ENCODE measurements at regions of chr6 and their contacts with region 1.

Region 1: DNA sequence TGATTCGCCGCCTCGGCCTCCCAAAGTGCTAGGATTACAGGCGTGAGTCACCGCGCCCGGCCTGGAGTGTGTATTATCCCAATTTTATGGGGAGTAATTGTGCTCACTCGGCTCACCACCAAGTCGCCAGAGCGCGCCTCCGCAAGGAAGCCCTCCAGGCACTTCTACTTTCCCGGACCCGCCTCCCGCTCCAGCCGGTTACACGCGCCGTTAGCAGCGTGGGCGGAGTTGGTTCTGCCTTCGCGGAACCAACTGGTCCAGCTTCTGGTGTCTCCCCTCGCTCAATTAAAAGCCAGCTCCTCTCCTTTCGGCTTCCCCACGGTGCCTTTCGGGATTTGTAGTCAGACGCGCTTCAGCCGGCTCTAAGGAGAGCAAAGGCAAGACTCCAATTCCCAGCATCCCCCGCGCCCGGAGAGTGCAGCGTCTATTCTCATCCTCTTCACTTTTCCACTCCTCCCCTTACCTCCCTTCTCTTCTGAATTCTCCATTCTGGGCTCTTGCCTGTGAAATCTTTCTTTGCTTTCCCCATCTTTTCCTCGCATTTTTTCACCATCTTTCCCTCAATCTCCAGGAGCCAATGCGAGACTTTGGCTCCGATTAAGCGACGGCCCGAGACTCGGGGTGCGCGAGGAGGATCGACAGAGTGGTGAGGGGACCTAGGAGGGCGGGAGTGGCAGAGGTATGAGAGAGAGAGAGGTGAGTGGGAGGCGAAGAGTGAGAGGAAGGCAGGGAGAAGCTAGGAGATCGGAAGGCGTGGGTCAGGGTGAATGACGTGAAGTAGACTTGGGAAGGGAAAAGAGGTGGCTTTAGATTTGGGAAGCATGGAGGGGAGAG is at the start of gene GTF2H4:
- DNase-seq: peak; percentile 99
- ATAC-seq: peak; percentile 96
- H3K4me3 ChIP-seq: peak within 1 kb of the TSS; percentile 99
- H3K27ac ChIP-seq: peak within 1 kb of the TSS; percentile 58
- H3K4me1 ChIP-seq: peaks cover 8 to 16% of the 10 kb centered on the region in 2 experiments; a peak in 3 of 4 replicates
- H3K27me3 ChIP-seq: no peaks in the 10 kb centered on the region
- CTCF ChIP-seq: no peak
- POLR2A ChIP-seq: no peak
- RAD21 ChIP-seq: no peak
- total RNA-seq, gene GTF2H4: 59.7 TPM

Region 2: DNA sequence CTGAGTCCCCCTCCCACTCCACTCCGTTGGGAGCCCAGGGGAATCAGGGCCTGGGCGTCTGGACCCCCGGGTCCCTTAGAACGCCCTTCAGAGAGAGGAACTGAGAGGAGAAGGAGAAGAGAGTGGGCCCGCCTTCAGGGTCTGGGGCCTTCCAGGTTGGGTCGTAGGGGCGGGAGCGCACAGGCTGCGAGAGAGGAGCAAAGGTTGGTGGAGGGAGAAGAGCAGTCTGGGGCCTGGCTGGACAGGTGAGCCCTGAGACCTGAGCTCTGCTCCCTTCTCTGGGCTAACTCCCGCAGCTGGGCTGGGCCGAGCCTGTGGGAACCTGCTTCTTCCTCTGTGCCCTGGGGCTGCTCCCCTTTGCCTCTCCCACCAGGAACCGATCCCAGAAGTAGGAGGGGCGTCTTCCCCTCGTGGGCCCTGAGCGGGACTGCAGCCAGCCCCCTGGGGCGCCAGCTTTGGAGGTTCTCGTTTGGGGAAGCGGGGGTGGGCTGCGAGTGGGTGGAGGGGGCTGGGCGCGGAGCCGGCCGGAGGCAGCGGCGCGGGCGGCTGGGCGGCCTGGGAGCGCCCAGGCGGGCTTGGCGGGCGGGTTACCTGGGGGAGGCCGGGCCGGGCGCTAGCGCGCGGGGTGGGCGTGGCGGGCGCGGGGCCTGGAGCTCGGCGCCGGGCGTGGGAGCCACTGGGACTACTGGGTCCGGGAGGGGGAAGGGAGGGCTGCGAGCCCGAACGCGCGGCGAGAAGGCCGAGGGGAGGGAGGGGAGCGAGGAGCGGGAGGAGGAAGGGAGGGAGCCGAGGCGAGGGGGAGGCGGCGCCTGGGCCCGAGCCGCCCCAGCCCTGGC is 24.1 kb before region 1 on chr6 and contains the start of gene DDR1:
- CTCF ChIA-PET with region 1: interaction called, 3 read pairs
- POLR2A ChIA-PET with region 1: interaction called, 3 read pairs
- RAD21 ChIA-PET with region 1: interaction called, 4 to 9 read pairs
- intact Hi-C with region 1: loop called (anchors 2 kb)
- DNase-seq: no peak
- ATAC-seq: peak; percentile 30
- H3K4me3 ChIP-seq: peak within 1 kb of the TSS; percentile 83 to 87
- H3K27ac ChIP-seq: peak within 1 kb of the TSS; percentile 99
- H3K4me1 ChIP-seq: peaks cover 50 to 65% of the 10 kb centered on the region in 2 experiments
- H3K27me3 ChIP-seq: no peaks in the 10 kb centered on the region
- CTCF ChIP-seq: no peak
- POLR2A ChIP-seq: no peak
- RAD21 ChIP-seq: no peak
- total RNA-seq, gene DDR1: 211 TPM

Measured in HCT116 (cell line).